GM12878 (cell line): ENCODE measurements at regions of chr20 and their contacts with region 1.

Region 1: GRCh38 chr20:37564388-37565133 is 36.9 kb upstream of the BLCAP start:
- DNase-seq: no peak
- ATAC-seq: peak; percentile 86
- H3K4me3 ChIP-seq: no peak overlapping the region
- H3K27ac ChIP-seq: no peak overlapping the region
- H3K4me1 ChIP-seq: no peaks in the 10 kb centered on the region
- H3K27me3 ChIP-seq: peaks cover 2 to 12% of the 10 kb centered on the region in 2 experiments
- CTCF ChIP-seq: peak; percentile 87 to 95 (median 92)
- EP300 ChIP-seq: no peak
- POLR2A ChIP-seq: no peak
- RAD21 ChIP-seq: peak; percentile 96

Region 2: DNA sequence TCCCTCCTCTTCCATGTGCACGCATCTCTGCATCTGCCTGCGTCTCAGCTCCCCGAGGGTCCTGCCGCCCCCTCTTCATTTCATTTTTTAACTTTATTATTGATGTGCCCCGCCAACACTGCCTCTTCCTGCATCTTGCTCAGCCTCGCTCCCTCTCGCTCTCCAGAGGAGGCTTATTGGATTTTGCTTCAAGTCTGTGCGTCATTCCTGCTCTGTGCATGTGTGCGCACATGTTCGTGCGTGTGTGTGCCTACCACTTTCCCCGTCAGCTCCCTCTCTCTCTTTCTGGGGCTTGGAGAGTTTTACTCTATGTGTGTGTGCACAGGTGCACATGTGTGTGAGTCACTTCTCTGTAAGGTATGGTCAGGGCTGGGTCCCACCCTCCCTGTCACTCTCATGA is 115.3 kb before region 1 on chr20:
- CTCF ChIA-PET with region 1: no interaction called
- POLR2A ChIA-PET with region 1: no interaction called
- RAD21 ChIA-PET with region 1: no interaction called
- SMC1A ChIA-PET with region 1: no interaction called
- in situ Hi-C with region 1: no loop called
- intact Hi-C with region 1: no loop called
- DNase-seq: no peak
- ATAC-seq: no peak
- H3K4me3 ChIP-seq: no peak overlapping the region
- H3K27ac ChIP-seq: no peak overlapping the region
- H3K4me1 ChIP-seq: no peaks in the 10 kb centered on the region
- H3K27me3 ChIP-seq: peaks cover 0 to 1% of the 10 kb centered on the region in 2 experiments; a peak in 2 of 4 replicates
- CTCF ChIP-seq: no peak
- EP300 ChIP-seq: no peak
- POLR2A ChIP-seq: no peak
- RAD21 ChIP-seq: no peak

Region 3: DNA sequence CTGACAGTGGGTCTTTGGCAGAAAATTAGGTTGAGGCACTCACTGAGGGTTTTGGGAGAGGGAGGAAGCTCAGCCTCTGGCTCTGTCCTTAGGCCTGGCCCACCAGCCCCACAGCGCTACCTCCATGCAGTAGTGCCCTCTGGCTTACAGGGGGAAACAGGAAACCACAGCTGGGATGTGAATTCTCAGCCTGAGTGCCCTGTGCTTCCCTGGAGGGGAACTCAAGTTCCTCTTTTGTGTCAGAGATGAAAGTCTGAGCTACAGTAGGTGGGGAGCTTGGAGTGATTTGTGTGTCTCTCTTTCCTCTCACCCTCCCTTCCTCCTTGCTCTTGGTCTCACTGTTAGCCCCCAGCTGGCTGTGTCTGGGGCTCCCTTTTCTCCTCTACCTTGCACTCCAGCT is 11.3 kb after region 1 on chr20:
- CTCF ChIA-PET with region 1: interaction called, 15 read pairs
- POLR2A ChIA-PET with region 1: no interaction called
- RAD21 ChIA-PET with region 1: no interaction called
- SMC1A ChIA-PET with region 1: interaction called, 3 read pairs
- in situ Hi-C with region 1: no loop called
- intact Hi-C with region 1: no loop called
- DNase-seq: peak; percentile 36
- ATAC-seq: peak; percentile 86
- H3K4me3 ChIP-seq: no peak overlapping the region
- H3K27ac ChIP-seq: no peak overlapping the region
- H3K4me1 ChIP-seq: peaks cover 13% of the 10 kb centered on the region
- H3K27me3 ChIP-seq: no peaks in the 10 kb centered on the region; a peak in 1 of 4 replicates
- CTCF ChIP-seq: no peak
- EP300 ChIP-seq: no peak
- POLR2A ChIP-seq: no peak
- RAD21 ChIP-seq: no peak

Region 4: DNA sequence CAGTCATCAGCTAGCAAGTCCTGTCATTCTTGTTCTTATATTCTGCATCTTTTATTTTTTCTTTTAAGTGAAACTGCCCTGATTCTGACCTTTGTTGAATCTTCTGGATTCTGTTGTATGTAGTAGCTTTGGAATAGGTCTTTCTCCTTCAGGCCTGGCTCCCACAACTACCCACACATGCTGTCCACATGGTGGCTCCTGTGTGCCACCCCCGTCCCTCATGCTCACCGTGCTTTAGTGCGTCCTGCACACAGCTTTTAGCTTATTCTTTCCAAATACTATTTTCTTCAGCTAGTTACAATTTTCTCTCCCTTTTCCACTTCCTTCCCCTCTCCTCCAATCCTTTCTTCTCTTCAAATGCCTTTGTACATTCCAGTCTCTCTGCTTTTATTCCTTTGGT is 191.1 kb after region 1 on chr20:
- CTCF ChIA-PET with region 1: no interaction called
- POLR2A ChIA-PET with region 1: no interaction called
- RAD21 ChIA-PET with region 1: no interaction called
- SMC1A ChIA-PET with region 1: no interaction called
- in situ Hi-C with region 1: no loop called
- intact Hi-C with region 1: loop called (anchors 10 kb)
- DNase-seq: no peak
- ATAC-seq: no peak
- H3K4me3 ChIP-seq: no peak overlapping the region
- H3K27ac ChIP-seq: no peak overlapping the region
- H3K4me1 ChIP-seq: no peaks in the 10 kb centered on the region
- H3K27me3 ChIP-seq: no peaks in the 10 kb centered on the region
- CTCF ChIP-seq: no peak
- EP300 ChIP-seq: no peak
- POLR2A ChIP-seq: no peak
- RAD21 ChIP-seq: no peak

Region 5: DNA sequence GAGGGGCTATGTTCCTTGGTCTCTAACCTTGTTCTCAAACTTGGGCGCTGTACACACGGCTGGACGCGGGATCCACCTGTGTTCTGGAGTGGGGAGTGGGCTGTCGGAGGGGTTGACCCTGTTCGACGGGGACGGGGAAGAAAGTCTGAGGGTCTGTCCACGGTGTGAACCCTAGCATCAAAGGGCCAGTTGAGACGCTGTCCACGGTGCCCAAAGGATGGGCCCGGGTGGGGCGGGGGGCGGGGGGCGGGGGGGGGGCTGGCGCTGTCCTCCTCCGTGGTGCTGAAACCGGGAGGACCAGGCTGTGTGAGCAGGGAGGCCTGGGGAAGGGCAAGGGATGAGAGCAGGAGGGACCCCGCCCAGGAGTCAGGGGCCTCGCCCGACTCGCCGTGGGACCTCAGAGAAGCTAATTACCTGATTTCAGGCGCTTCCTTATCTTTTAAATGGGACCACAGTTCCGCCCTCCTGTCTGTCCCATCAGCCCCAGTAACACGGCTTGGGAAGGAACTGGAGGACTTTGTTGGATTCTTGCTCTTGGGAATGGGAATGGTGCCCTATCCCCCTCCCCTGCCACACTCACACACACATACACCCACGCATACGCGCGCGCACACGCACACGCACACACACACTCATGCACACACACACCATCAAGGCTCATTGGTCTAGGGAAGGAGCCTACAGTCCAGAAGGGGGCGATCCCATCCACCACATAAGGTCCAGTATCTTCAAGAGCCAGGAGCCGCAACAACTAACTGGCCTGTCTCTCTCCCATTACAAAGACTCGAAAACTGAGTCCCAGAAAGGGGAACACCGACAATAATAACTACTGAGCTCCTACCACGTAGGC is 337.3 kb after region 1 on chr20:
- CTCF ChIA-PET with region 1: no interaction called
- POLR2A ChIA-PET with region 1: no interaction called
- RAD21 ChIA-PET with region 1: no interaction called
- SMC1A ChIA-PET with region 1: no interaction called
- in situ Hi-C with region 1: no loop called
- intact Hi-C with region 1: loop called (anchors 5 kb)
- DNase-seq: no peak
- ATAC-seq: peak; percentile 94
- H3K4me3 ChIP-seq: peak overlapping the region; percentile 61; the same call in 1 of the 2 replicates
- H3K27ac ChIP-seq: no peak overlapping the region
- H3K4me1 ChIP-seq: no peaks in the 10 kb centered on the region; the same call in 1 of the 2 replicates
- H3K27me3 ChIP-seq: peaks cover 1 to 4% of the 10 kb centered on the region in 2 experiments; a peak in 1 of 4 replicates
- CTCF ChIP-seq: peak; percentile 69 to 75 (median 72)
- EP300 ChIP-seq: no peak
- POLR2A ChIP-seq: no peak
- RAD21 ChIP-seq: peak; percentile 76

Region 6: DNA sequence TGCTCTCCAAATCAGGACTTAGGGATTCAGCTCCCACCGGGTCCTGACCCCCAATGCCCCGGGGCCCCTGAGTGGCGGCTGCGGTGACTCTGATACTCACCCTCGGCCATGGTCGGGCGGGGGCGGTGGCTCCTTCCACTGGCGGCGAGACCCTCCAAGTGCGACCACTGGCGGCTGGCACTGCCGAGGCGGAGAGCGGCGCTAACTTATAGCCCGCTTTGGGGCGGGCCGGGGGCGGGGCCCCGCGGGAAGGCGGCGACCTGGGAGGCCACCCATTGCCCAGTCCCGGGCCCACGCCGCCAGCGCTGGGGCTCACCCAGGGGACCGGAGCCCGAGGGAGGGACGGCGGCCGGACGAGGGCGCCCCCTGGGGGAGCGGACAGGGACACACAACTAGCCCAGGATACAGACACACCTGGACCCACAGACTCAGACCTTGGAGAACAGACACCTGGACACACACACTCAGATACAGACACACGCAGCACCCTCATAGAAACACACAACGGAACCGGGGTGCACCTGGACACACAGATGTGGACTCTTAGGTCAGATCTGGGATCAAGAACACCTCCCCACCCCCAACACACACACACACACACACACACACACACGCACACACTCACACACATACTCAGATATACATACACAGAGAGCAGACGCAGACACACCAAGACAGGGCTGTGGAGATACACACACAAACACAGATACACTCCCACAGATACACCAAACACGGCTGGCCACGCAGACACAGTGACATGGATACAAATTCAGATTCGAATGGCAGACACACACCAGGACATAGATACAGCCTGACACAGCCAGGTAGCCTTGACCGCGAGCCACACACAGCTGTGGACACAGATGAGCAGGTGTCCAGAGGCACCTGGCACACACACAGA is 600.8 kb after region 1 on chr20 and contains the start of gene TGM2:
- CTCF ChIA-PET with region 1: no interaction called
- POLR2A ChIA-PET with region 1: no interaction called
- RAD21 ChIA-PET with region 1: no interaction called
- SMC1A ChIA-PET with region 1: no interaction called
- in situ Hi-C with region 1: no loop called
- intact Hi-C with region 1: loop called (anchors 5 kb)
- DNase-seq: peak; percentile 32
- ATAC-seq: peak; percentile 97
- H3K4me3 ChIP-seq: peak within 1 kb of the TSS; percentile 25; the same call in 1 of the 2 replicates
- H3K27ac ChIP-seq: no peak within 1 kb of the TSS
- H3K4me1 ChIP-seq: peaks cover 17% of the 10 kb centered on the region
- H3K27me3 ChIP-seq: no peaks in the 10 kb centered on the region
- CTCF ChIP-seq: peak; percentile 80 to 88 (median 85)
- EP300 ChIP-seq: no peak
- POLR2A ChIP-seq: no peak
- RAD21 ChIP-seq: peak; percentile 87
- polyA plus RNA-seq, gene TGM2: 0.11 to 0.16 TPM